Posterior vena cava (tissue), 2 donors: ENCODE measurements at regions of chr14 and their contacts with region 1.

Region 1: DNA sequence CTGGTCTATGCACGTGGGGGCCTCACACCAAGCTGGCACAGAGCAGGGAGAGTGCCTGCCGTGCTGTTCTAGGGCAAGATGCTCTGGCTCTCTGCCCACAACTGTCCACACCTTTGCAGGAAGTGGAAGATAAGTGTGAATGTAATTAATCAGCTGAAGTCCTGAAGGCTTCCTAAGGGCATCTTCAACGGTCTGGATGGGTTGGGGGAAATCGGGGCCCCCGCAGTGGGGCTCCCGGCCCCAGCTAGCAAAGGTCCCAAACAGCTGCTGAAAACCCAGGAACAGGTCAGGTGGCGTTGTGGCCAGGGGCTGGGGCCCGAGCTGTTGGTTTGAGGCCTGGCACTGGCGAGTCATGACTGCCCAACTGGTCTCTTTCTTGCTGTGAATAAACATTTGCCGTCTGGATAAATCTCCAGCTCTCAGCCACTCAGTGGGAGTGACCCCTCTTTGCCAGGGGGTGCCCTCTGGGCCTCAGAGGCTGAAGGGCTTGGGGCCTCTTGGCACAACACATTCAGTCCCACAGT is 6.7 kb upstream of the SLC25A29 start:
- DNase-seq: no peak

Region 2: DNA sequence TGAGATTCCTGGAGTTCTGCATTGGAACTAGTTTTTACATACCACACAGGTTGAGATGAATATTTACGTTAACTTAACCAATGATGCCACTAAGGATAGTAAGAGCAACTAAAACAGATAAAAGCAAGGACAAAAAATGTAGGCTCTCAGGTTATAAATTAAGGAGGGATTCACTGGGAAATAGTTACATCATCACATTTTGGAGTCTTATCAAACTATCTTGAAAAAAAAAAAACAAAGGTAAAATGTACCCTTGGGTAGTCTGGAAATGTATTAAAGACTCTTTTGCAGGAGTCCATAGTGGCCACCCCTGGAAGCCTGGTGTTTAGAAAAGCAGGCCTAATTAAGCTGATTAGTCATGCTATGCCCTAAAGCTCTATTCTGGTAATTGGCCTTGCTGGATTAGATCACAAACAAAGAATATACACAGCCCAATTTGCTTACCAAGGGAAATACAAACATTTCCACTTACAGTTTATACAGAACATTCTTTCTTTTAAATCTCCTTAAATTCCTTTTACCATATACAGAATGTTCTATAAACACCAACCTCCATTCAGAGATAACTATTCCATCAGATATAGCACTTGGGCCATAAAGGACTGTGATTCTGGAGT is 49.5 kb after region 1 on chr14:
- intact Hi-C with region 1: loop called in 1 of 2 experiments (anchors 5 kb)
- DNase-seq: no peak